ENCODE measurements at regions of chr11 and their contacts with region 1.

Region 1: GRCh38 chr11:22337596-22338485 is at the start of gene SLC17A6:
- DNase-seq: peak; percentile 29 to 63
- H3K4me3 ChIP-seq: no peak within 1 kb of the TSS
- H3K4me1 ChIP-seq: no peaks in the 10 kb centered on the region
- H3K27me3 ChIP-seq: peaks cover 35% of the 10 kb centered on the region

Region 2: DNA sequence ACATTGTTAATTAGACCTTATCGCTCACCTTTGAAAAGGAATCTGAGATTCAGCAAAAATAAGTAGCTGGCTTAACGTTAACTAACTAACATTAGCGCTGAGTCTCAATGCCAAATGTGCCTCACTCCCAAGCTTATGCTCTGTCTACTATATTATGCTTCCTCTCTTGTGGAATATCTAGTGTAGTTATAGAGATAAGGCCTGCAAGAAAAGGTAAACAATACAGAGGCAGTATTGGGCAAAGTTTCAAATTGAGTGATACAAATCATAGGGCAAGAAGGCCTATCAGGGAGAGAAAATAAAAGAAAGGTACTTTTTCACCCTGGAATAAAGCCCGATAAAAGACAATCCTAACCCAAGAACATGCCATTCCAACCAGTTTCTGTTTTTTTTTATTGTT is 61.3 kb before region 1 on chr11:
- in situ Hi-C with region 1: no loop called
- DNase-seq: no peak
- H3K4me3 ChIP-seq: no peak overlapping the region
- H3K4me1 ChIP-seq: no peaks in the 10 kb centered on the region
- H3K27me3 ChIP-seq: no peaks in the 10 kb centered on the region

Region 3: GRCh38 chr11:22539821-22540256 is 202.0 kb after region 1 on chr11:
- in situ Hi-C with region 1: loop called (anchors 25 kb)
- DNase-seq: no peak
- H3K4me3 ChIP-seq: no peak overlapping the region
- H3K4me1 ChIP-seq: no peaks in the 10 kb centered on the region
- H3K27me3 ChIP-seq: no peaks in the 10 kb centered on the region

Region 4: DNA sequence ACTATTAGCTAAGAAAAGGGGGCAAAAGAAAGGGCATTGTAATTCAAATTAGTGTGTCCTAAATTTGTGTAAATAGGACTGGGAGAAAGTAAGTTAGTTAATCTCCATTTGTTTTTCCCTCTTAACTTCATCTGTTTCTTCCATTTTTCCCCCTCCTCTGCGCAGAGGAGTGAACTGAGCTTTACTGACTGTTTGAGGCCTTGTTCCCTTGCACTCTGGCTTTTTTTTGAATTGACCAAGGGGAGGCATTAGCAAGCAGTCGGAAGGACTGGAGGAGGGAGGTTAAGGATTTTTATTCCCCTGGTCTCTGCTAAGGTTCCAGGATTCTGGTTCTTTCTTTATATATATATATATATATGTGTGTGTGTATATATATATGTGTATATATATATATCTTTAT is 303.0 kb after region 1 on chr11:
- in situ Hi-C with region 1: no loop called
- DNase-seq: peak; percentile 20 to 34
- H3K4me3 ChIP-seq: no peak overlapping the region
- H3K4me1 ChIP-seq: peaks cover 8% of the 10 kb centered on the region
- H3K27me3 ChIP-seq: no peaks in the 10 kb centered on the region

Region 5: GRCh38 chr11:22787551-22788162 is 449.8 kb after region 1 on chr11:
- in situ Hi-C with region 1: loop called (anchors 25 kb)
- DNase-seq: peak; percentile 34 to 64
- H3K4me3 ChIP-seq: no peak overlapping the region
- H3K4me1 ChIP-seq: peaks cover 1% of the 10 kb centered on the region; the same call in 1 of the 2 replicates
- H3K27me3 ChIP-seq: no peaks in the 10 kb centered on the region

Measured in HAP-1 (cell line).